Activated CD4-positive, alpha-beta memory T cell treated with anti-CD3 and anti-CD28 coated beads for 36 hours (primary cell): ENCODE measurements at regions of chr7 and their contacts with region 1.

Region 1: GRCh38 chr7:50266635-50267386 is 37.7 kb upstream of the IKZF1 start:
- DNase-seq: peak; percentile 90
- H3K4me3 Mint-ChIP-seq: peak overlapping the region; percentile 64
- H3K27ac Mint-ChIP-seq: peak overlapping the region; percentile 96
- H3K4me1 Mint-ChIP-seq: peaks cover 96% of the 10 kb centered on the region
- H3K27me3 Mint-ChIP-seq: no peaks in the 10 kb centered on the region

Region 2: GRCh38 chr7:50142425-50143017 is 124.3 kb before region 1 on chr7:
- CTCF ChIA-PET with region 1: interaction called, 3 read pairs
- POLR2A ChIA-PET with region 1: no interaction called
- intact Hi-C with region 1: loop called (anchors 2 kb)
- DNase-seq: no peak
- H3K4me3 Mint-ChIP-seq: peak overlapping the region; percentile 14
- H3K27ac Mint-ChIP-seq: peak overlapping the region; percentile 59
- H3K4me1 Mint-ChIP-seq: peaks cover 28% of the 10 kb centered on the region
- H3K27me3 Mint-ChIP-seq: peaks cover 2% of the 10 kb centered on the region

Region 3: DNA sequence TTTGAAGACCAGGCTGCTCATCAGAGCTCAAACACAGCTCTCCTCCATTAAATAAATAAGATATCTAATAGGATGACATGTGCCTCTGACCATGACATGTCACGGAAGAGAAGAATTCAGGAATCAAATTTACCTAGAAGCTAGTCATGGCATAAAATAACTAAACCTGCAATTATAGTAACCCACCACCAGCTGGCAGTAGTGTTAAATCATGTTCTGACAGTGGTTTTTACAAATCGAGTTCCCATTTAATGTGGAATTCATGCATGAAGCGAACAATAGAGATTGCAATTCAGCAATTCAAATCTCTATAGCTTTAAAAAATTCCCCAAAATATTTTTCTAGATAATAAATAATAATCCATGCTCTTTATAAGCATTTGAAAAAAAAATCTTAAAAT is 36.8 kb before region 1 on chr7:
- CTCF ChIA-PET with region 1: interaction called, 18 read pairs
- POLR2A ChIA-PET with region 1: interaction called, 5 read pairs
- intact Hi-C with region 1: loop called (anchors 1 kb)
- DNase-seq: no peak
- H3K4me3 Mint-ChIP-seq: no peak overlapping the region
- H3K27ac Mint-ChIP-seq: no peak overlapping the region
- H3K4me1 Mint-ChIP-seq: peaks cover 36% of the 10 kb centered on the region
- H3K27me3 Mint-ChIP-seq: no peaks in the 10 kb centered on the region

Region 4: DNA sequence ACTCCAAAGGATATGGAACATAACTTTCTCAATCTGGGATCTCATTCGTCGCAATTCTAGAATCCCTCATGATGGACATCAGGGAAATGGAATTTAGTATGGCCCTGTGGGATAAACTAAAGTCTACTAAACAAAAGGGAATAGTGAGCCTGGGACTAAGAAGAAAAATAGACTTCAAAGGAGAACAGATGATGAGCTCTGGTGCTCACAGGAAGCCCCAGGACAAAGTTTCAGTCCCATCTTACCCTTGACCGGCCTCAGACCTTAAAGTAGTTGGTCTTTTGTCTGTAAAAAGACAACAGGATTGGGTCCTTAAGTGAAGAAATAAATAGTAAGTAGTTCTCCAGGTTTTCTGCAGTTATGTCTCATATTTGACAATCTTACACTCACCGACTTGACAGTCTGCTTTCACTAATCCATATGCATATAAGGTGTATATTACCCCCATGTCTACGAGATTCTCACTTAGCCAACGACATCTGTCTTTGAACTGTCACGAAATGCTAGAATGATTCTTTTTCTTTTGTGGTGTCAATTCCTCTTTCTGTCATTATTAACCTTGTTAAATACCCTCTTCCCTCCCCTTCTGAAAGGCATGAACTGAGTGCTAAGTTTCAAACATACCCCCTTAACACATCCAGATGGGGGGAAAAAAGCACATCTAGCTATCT is 26.8 kb after region 1 on chr7:
- CTCF ChIA-PET with region 1: interaction called, 4 read pairs
- POLR2A ChIA-PET with region 1: no interaction called
- intact Hi-C with region 1: loop called (anchors 1 kb)
- DNase-seq: no peak
- H3K4me3 Mint-ChIP-seq: no peak overlapping the region
- H3K27ac Mint-ChIP-seq: no peak overlapping the region
- H3K4me1 Mint-ChIP-seq: peaks cover 26% of the 10 kb centered on the region
- H3K27me3 Mint-ChIP-seq: peaks cover 1% of the 10 kb centered on the region

Region 5: GRCh38 chr7:50317221-50317678 is 50.4 kb after region 1 on chr7:
- CTCF ChIA-PET with region 1: interaction called, 4 read pairs
- POLR2A ChIA-PET with region 1: interaction called, 11 read pairs
- intact Hi-C with region 1: no loop called
- DNase-seq: peak; percentile 75
- H3K4me3 Mint-ChIP-seq: peak overlapping the region; percentile 86
- H3K27ac Mint-ChIP-seq: peak overlapping the region; percentile 94
- H3K4me1 Mint-ChIP-seq: peaks cover 92% of the 10 kb centered on the region
- H3K27me3 Mint-ChIP-seq: no peaks in the 10 kb centered on the region

Region 6: GRCh38 chr7:50369143-50370026 is 102.6 kb after region 1 on chr7:
- CTCF ChIA-PET with region 1: interaction called, 5 read pairs
- POLR2A ChIA-PET with region 1: interaction called, 9 read pairs
- intact Hi-C with region 1: loop called (anchors 1 kb)
- DNase-seq: peak; percentile 56
- H3K4me3 Mint-ChIP-seq: no peak overlapping the region
- H3K27ac Mint-ChIP-seq: peak overlapping the region; percentile 93
- H3K4me1 Mint-ChIP-seq: peaks cover 97% of the 10 kb centered on the region
- H3K27me3 Mint-ChIP-seq: no peaks in the 10 kb centered on the region